ENCODE measurements at regions of chr11 and their contacts with region 1.

Region 1: GRCh38 chr11:26753723-26754504 is 32.1 kb upstream of the SLC5A12 start:
- DNase-seq: peak; percentile 20 to 43 (median 30)
- ATAC-seq: peak; percentile 79 to 91
- H3K4me3 ChIP-seq: no peak overlapping the region
- H3K27ac ChIP-seq: no peak overlapping the region
- H3K4me1 ChIP-seq: no peaks in the 10 kb centered on the region
- H3K27me3 ChIP-seq: no peaks in the 10 kb centered on the region

Region 2: GRCh38 chr11:26782223-26782965 is 28.5 kb after region 1 on chr11:
- intact Hi-C with region 1: no loop called
- DNase-seq: no peak
- ATAC-seq: no peak
- H3K4me3 ChIP-seq: no peak overlapping the region
- H3K27ac ChIP-seq: no peak overlapping the region
- H3K4me1 ChIP-seq: no peaks in the 10 kb centered on the region
- H3K27me3 ChIP-seq: no peaks in the 10 kb centered on the region

Region 3: GRCh38 chr11:27111896-27112295 is 358.0 kb after region 1 on chr11:
- intact Hi-C with region 1: no loop called
- DNase-seq: no peak
- ATAC-seq: no peak
- H3K4me3 ChIP-seq: no peak overlapping the region
- H3K27ac ChIP-seq: no peak overlapping the region
- H3K4me1 ChIP-seq: no peaks in the 10 kb centered on the region
- H3K27me3 ChIP-seq: no peaks in the 10 kb centered on the region

Region 4: DNA sequence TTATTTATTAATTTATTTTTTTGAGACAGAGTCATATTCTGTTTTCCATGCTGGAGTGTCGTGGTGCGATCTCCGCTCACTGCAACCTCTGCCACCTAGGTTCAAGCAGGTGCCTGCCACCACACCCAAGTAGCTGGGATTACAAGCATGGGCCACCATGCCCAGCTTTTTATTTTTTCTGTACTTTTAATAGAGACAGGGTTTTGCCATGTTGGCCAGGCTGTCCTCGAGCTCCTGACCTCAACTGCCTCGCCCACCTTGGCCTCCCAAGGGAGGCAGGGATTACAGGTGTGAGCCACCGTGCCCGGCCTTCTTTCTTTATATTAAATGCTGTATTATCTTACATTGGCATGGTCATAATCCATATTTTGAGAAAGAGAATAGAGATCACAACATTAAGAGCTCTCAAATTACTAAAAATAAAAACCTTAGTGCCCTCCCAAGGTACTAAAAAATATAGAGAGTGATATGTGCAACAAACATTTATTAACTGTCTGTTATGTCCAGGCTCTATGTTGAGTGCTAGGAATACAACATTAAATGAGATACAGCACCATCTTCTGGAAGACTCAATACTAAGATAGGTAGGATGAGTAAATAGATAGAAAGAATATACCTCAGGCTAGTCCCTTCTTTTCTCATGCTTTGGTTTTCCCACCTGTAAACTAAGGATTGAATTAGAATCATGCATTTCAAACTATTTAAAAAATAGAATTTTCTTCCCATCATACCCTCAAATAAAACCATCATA is 370.8 kb after region 1 on chr11:
- intact Hi-C with region 1: loop called in 1 of 4 experiments (anchors 10 kb)
- DNase-seq: peak in 1 of 3 donors; percentile 27
- ATAC-seq: peak in 1 of 2 donors; percentile 41
- H3K4me3 ChIP-seq: no peak overlapping the region
- H3K27ac ChIP-seq: no peak overlapping the region
- H3K4me1 ChIP-seq: no peaks in the 10 kb centered on the region
- H3K27me3 ChIP-seq: no peaks in the 10 kb centered on the region

Region 5: DNA sequence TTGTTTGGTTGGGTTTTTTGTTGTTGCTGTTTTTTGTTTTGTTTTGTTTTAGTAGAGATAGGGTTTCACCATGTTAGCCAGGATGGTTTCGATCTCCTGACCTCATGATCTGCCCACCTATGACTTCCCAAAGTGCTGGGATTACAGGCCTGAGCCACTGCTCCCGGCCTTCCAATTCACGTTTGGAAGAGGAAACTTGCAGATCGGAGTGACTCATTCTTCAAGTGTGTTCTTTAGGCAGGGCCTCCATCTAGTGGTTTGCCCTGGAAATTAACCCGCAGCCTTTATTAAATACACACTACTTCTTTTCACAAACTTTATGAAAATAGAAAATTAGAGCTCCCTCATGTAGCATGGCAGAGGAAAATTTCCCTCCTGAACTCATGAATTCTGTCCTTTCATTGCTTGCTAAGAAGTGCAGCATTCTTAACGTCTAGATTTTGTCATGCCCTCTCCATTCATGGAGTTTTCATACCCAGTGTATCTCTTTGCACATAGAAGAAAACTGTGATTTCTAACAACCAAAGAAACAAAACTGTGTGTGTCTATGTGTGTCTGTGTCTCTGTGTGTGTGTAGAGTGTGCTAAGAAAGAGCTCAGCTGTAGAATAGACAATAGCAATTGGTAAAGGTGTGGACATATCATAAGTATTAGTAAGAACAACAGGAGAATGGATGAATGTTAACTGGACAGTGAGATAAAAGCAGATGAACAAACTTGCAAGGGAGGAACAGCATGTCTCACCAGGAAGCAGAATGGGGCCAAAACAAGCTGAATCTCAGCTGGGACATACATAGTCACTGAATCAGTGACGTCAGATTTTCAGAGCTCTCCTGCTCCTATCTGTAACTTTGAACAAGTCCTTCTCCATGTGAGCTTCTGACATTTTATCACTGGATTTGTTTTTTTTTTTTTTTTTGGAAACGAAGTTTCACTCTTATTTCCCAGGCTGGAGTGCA is 405.1 kb after region 1 on chr11:
- intact Hi-C with region 1: loop called (anchors 5 to 10 kb)
- DNase-seq: peak in 2 of 3 donors; percentile 30 to 66
- ATAC-seq: peak; percentile 92 to 94
- H3K4me3 ChIP-seq: no peak overlapping the region
- H3K27ac ChIP-seq: no peak overlapping the region
- H3K4me1 ChIP-seq: no peaks in the 10 kb centered on the region
- H3K27me3 ChIP-seq: no peaks in the 10 kb centered on the region

Measured in right cardiac atrium (tissue), 5 donors.